ENCODE measurements at regions of chr14 and their contacts with region 1.

Region 1: DNA sequence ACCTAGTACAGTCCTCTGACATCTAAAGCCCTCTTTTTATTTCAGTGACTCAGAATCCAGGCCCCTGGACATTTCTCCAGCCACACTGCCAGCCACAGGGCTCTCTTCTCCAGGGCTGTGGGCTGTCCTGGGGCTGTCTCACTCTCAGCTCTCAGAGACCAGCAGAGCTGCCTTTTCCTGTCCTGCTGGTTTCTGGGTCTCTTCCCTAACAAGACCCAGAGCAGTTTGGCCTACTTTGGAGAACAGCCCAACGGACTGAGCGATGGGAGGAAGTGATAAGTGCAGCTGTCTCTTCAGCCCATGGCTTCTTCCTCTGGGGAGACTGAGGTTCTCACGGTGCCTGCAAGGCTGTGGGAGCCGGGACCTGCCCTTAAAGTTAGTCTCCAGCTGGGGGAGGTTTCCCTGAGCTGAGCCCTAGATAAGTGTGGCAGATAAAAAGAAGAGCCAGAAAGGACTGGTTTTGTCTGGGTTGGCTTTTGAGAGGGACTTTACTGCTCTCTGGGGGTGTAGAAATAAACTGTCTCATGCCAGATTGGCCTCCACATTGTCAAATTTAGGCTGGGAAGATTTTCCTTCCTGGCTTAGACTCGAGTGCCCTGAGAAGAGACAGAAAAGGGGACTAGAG is 979.9 kb downstream of the VRK1 start:
- DNase-seq: peak in 2 of 9 experiments; percentile 24 to 37
- ATAC-seq: peak; percentile 44
- H3K4me3 ChIP-seq: no peak overlapping the region
- H3K4me3 Mint-ChIP-seq: peak overlapping the region; percentile 55
- H3K27ac ChIP-seq: no peak overlapping the region
- H3K27ac Mint-ChIP-seq: peak overlapping the region; percentile 18
- H3K4me1 ChIP-seq: peaks cover 16% of the 10 kb centered on the region
- H3K4me1 Mint-ChIP-seq: peaks cover 20% of the 10 kb centered on the region
- H3K27me3 ChIP-seq: no peaks in the 10 kb centered on the region
- H3K27me3 Mint-ChIP-seq: no peaks in the 10 kb centered on the region
- CTCF ChIP-seq: no peak

Region 2: GRCh38 chr14:97177015-97177414 is 600.0 kb before region 1 on chr14:
- CTCF ChIA-PET with region 1: no interaction called
- POLR2A ChIA-PET with region 1: no interaction called
- intact Hi-C with region 1: loop called in 1 of 2 experiments (anchors 5 kb)
- DNase-seq: peak in 5 of 9 experiments; percentile 3 to 63 (median 24)
- ATAC-seq: peak; percentile 58
- H3K4me3 ChIP-seq: no peak overlapping the region
- H3K4me3 Mint-ChIP-seq: no peak overlapping the region
- H3K27ac ChIP-seq: no peak overlapping the region
- H3K27ac Mint-ChIP-seq: no peak overlapping the region
- H3K4me1 ChIP-seq: peaks cover 6% of the 10 kb centered on the region
- H3K4me1 Mint-ChIP-seq: peaks cover 29% of the 10 kb centered on the region
- H3K27me3 ChIP-seq: no peaks in the 10 kb centered on the region
- H3K27me3 Mint-ChIP-seq: no peaks in the 10 kb centered on the region
- CTCF ChIP-seq: peak; percentile 45